ENCODE measurements at regions of chr3 and their contacts with region 1.

Region 1: GRCh38 chr3:143001369-143002082 is at the start of gene U2SURP:
- DNase-seq: peak; percentile 76 to 97 (median 91)
- ATAC-seq: peak; percentile 94 to 97 (median 96)
- H3K4me3 ChIP-seq: peak within 1 kb of the TSS; percentile 95 to 100
- H3K4me3 Mint-ChIP-seq: peak within 1 kb of the TSS; percentile 94 to 99 (median 97)
- H3K27ac ChIP-seq: peak within 1 kb of the TSS; percentile 95
- H3K27ac Mint-ChIP-seq: peak within 1 kb of the TSS; percentile 98 to 100
- H3K4me1 ChIP-seq: peaks cover 26 to 32% of the 10 kb centered on the region in 2 experiments
- H3K4me1 Mint-ChIP-seq: peaks cover 46 to 51% (median 47%) of the 10 kb centered on the region in 3 donors
- H3K27me3 ChIP-seq: peaks cover 0 to 3% of the 10 kb centered on the region in 2 experiments
- H3K27me3 Mint-ChIP-seq: peaks cover 2 to 3% of the 10 kb centered on the region in 2 donors
- total RNA-seq, gene U2SURP: 113 to 164 (median 122) TPM

Region 2: DNA sequence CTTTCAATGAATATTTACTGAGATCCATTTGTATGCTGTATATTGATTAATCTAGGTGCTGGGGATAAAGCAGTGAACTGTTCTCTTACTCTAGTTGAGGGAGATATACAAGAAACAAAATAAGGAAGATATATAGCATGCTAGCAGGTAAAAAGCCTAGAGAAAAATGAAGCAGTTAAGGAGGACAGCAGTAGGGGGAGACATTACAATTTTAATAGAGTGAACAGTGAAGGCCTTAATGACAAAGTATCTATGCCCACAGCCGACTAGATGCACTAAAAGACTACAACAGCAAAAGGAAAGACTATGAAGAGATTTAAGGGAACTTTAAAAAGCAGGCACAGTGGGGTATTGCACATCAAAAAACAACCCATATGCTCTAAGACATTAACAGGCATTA is 635.1 kb before region 1 on chr3:
- CTCF ChIA-PET with region 1: no interaction called
- POLR2A ChIA-PET with region 1: interaction called in 1 of 2 experiments, 10 read pairs
- DNase-seq: no peak
- ATAC-seq: no peak
- H3K4me3 ChIP-seq: no peak overlapping the region
- H3K4me3 Mint-ChIP-seq: no peak overlapping the region
- H3K27ac ChIP-seq: no peak overlapping the region
- H3K27ac Mint-ChIP-seq: no peak overlapping the region
- H3K4me1 ChIP-seq: no peaks in the 10 kb centered on the region
- H3K4me1 Mint-ChIP-seq: peaks cover 0 to 2% (median 0%) of the 10 kb centered on the region in 3 donors
- H3K27me3 ChIP-seq: no peaks in the 10 kb centered on the region
- H3K27me3 Mint-ChIP-seq: no peaks in the 10 kb centered on the region

Region 3: DNA sequence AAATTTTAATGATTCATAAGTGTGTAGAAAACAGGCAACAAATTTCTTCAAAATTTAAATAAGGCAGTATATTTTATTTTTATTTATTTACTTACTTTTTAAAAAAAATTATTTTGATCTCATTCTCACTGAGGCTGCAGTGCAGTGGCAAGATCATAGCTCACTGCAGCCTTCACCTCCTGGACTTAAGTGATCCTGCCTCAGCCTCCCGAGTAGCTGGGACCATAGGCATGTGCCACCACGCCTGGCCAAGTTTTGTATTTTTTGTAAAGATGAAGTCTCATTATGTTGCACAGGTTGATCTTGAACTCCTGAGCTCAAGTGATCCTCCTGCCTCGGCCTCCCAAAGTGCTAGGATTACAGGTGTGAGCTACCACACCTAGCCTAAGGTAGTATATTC is 492.4 kb before region 1 on chr3:
- CTCF ChIA-PET with region 1: no interaction called
- POLR2A ChIA-PET with region 1: interaction called in 1 of 2 experiments, 14 read pairs
- DNase-seq: peak in 5 of 35 experiments; percentile 1 to 19 (median 11)
- ATAC-seq: peak in 1 of 4 experiments; percentile 66
- H3K4me3 ChIP-seq: peak overlapping the region in 1 of 2 donors; percentile 53
- H3K4me3 Mint-ChIP-seq: peak overlapping the region; percentile 79 to 85 (median 82)
- H3K27ac ChIP-seq: peak overlapping the region; percentile 53
- H3K27ac Mint-ChIP-seq: peak overlapping the region; percentile 85 to 91
- H3K4me1 ChIP-seq: peaks cover 0 to 10% of the 10 kb centered on the region in 2 experiments
- H3K4me1 Mint-ChIP-seq: peaks cover 4 to 11% (median 11%) of the 10 kb centered on the region in 3 donors
- H3K27me3 ChIP-seq: no peaks in the 10 kb centered on the region
- H3K27me3 Mint-ChIP-seq: no peaks in the 10 kb centered on the region

Region 4: DNA sequence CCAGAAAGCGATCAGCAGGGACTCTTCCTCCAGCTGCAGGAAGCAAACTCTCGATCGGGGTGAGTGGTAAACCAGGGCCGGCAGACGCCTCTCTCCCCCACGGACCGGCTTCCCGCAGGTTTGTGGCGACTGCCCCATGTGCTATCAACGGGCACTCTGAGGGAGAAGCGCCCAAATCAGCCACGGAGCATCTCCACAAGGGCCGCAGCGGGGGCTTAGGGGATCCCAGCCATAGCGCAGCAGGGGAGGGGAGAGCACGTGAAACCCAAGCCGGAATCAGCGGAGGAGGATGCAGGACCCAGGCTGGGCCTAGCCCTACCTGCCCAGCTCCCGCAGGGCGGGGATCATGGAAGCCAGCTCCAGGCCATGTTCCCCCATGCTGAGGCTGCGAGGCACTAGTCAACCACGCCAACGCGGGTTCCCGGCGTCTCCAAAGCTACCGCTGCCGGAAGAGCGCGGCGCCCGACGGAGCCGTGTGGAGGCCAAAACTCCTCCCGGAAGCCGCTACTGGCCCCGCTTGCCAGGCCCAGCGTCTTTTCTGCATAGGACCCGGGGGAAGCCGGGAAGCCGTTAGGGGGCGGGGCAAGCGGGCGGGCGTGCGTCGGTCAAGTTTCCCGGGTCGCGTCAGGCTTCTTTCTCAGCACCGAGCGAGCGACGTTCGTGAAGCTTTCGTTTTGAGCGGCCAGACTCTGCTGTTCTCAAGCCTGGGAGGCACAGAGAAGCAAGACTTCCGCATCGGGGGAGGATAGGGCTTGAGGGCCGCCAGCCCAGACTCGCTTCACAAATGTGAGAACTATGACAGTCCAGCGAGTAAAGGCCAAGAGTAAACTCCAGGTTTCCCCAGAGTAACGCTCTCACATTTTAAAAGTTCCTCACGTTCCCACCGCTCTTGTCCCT is 423.0 kb before region 1 on chr3 and contains the start of gene ATR:
- CTCF ChIA-PET with region 1: interaction called, 8 to 9 read pairs
- POLR2A ChIA-PET with region 1: interaction called, 11 read pairs
- DNase-seq: peak; percentile 91 to 97 (median 94)
- ATAC-seq: peak; percentile 92 to 94 (median 93)
- H3K4me3 ChIP-seq: peak within 1 kb of the TSS; percentile 94 to 96
- H3K4me3 Mint-ChIP-seq: peak within 1 kb of the TSS; percentile 93 to 97 (median 96)
- H3K27ac ChIP-seq: peak within 1 kb of the TSS; percentile 98
- H3K27ac Mint-ChIP-seq: peak within 1 kb of the TSS; percentile 97 to 98
- H3K4me1 ChIP-seq: peaks cover 14 to 21% of the 10 kb centered on the region in 2 experiments
- H3K4me1 Mint-ChIP-seq: peaks cover 53 to 56% (median 56%) of the 10 kb centered on the region in 3 donors
- H3K27me3 ChIP-seq: peaks cover 0 to 6% of the 10 kb centered on the region in 2 experiments
- H3K27me3 Mint-ChIP-seq: peaks cover 0 to 4% of the 10 kb centered on the region in 2 donors
- total RNA-seq, gene ATR: 32.8 to 40.9 (median 36.3) TPM

Region 5: DNA sequence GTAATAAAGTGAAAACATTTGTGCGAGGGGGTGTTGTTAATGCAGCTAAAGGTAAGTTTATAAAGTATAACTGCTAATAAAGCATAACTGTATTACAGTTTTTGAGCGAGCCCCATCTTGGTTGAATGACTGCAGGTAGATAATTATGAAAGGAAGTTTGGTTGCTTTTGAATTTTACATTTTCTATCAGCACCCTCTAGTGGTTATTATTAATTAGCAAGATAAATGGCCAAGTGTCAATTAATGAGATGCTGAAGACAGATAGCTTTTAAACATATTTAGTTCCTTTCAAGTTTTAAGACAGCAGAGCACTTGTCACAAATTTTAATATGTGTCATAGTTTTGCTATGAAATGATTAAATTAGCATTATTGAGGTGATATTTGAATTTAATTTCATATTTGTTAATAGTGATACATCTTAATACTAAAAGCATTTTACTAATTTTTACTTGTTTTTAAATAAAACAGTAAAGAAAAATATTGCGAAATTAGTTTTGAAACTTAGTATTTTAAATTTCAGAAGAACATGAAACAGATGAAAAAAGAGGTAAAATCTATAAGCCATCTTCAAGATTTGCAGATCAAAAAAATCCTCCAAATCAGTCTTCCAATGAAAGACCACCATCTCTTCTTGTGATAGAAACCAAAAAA is 14.9 kb after region 1 on chr3:
- CTCF ChIA-PET with region 1: interaction called in 1 of 2 experiments, 26 read pairs
- POLR2A ChIA-PET with region 1: interaction called, 3 to 19 read pairs
- DNase-seq: peak in 1 of 35 experiments; percentile 34
- ATAC-seq: no peak
- H3K4me3 ChIP-seq: no peak overlapping the region
- H3K4me3 Mint-ChIP-seq: no peak overlapping the region
- H3K27ac ChIP-seq: no peak overlapping the region
- H3K27ac Mint-ChIP-seq: no peak overlapping the region
- H3K4me1 ChIP-seq: no peaks in the 10 kb centered on the region
- H3K4me1 Mint-ChIP-seq: peaks cover 13 to 18% (median 17%) of the 10 kb centered on the region in 3 donors
- H3K27me3 ChIP-seq: no peaks in the 10 kb centered on the region
- H3K27me3 Mint-ChIP-seq: no peaks in the 10 kb centered on the region

Region 6: GRCh38 chr3:143389388-143389787 is 387.9 kb after region 1 on chr3:
- CTCF ChIA-PET with region 1: no interaction called
- POLR2A ChIA-PET with region 1: no interaction called
- DNase-seq: no peak
- ATAC-seq: no peak
- H3K4me3 ChIP-seq: no peak overlapping the region
- H3K4me3 Mint-ChIP-seq: no peak overlapping the region
- H3K27ac ChIP-seq: no peak overlapping the region
- H3K27ac Mint-ChIP-seq: no peak overlapping the region
- H3K4me1 ChIP-seq: no peaks in the 10 kb centered on the region
- H3K4me1 Mint-ChIP-seq: no peaks in the 10 kb centered on the region
- H3K27me3 ChIP-seq: no peaks in the 10 kb centered on the region
- H3K27me3 Mint-ChIP-seq: no peaks in the 10 kb centered on the region

Measured in T-cell (primary cell).